SK-N-SH (cell line): ENCODE measurements at regions of chr11 and their contacts with region 1.

Region 1: DNA sequence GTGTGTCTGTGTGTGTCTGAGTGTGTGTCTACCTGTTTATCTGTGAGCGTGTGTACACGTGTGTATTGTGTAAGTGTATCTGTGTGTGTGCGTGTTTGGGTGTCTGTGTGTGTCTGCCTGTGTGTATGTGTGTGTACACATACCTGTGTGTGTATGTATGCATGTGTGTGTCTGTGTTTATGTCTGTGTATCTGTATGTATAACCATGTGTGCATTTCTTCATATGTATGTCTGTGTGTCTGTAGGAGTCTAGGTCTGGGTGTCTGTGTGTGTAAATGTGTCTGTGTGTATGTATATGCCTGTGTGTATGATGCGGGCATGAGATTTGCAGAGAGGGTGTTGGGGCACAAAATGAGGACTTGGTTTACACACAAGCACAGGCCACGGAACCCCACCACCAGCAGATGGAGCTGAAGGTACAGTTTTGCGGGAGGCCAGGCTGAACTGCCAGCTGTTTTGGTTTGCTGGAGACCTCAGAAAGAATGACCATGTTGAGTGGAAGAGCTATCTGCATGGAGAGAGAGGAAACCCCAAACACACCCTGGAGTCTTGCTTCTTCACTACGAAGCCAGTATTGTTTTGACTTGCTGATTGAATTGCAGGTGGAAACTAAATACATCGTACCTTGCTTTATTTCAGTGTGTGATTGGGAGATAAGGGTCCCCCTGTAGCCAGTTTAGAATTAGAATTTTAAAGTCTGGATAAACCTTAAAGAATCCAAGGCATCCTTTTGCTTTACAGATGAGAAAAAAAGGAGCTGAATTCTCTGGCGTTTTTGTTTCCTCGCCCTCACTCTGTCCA is 497.2 kb downstream of the NTM start:
- DNase-seq: peak; percentile 70
- H3K4me3 ChIP-seq: no peak overlapping the region; a peak in 1 of 4 replicates
- H3K27ac ChIP-seq: no peak overlapping the region
- H3K4me1 ChIP-seq: peaks cover 0 to 11% of the 10 kb centered on the region in 2 experiments; a peak in 2 of 4 replicates
- H3K27me3 ChIP-seq: no peaks in the 10 kb centered on the region
- CTCF ChIP-seq: peak; percentile 94
- EP300 ChIP-seq: no peak
- RAD21 ChIP-seq: peak; percentile 97

Region 2: DNA sequence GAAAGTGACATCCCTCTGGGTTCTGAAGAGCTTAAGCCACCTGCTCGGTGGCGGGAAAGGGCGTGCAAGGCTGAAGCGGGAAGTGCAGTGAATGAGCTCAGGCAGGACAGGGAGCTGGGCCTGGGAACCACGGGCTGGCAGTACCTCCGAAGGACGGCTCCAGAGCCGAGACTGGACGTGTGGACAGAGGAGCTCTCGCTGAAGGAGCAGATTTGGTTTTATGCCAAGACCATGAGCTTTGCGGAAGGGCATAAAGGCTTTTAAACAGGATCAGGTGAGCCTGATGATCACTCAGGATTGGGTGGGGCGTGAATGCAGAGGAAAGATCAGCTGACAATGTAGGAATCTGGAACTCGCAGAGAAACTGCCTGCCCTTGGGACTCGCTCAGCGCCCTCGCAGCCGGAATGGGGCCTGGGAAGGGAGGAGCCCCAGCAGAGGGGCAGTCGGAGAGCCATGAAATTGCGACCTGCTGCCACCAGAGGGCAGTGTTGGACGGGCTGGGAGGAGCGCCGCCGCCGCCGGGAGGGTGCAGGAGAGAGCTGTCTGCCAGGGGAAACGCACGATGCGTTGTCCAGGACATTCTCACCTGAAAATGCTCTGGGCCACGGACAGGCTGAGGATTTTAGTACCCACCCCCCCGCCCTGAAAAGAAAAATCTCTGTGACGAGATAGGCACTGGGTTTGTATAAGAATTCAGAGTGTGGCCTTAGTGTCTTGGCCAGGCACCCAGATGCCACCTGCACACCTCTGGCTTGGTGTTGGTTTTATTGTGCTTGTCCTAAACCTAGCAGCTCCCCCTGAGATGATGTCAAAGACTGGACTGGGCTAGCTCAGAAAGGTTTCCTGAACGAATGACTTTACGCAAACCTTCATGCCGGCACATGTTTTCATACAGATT is 172.9 kb before region 1 on chr11:
- CTCF ChIA-PET with region 1: interaction called, 20 read pairs
- POLR2A ChIA-PET with region 1: no interaction called
- DNase-seq: peak; percentile 86
- H3K4me3 ChIP-seq: no peak overlapping the region; a peak in 1 of 4 replicates
- H3K27ac ChIP-seq: no peak overlapping the region
- H3K4me1 ChIP-seq: peaks cover 0 to 7% of the 10 kb centered on the region in 2 experiments; a peak in 1 of 4 replicates
- H3K27me3 ChIP-seq: no peaks in the 10 kb centered on the region
- CTCF ChIP-seq: peak; percentile 84
- EP300 ChIP-seq: no peak
- RAD21 ChIP-seq: peak; percentile 76

Region 3: DNA sequence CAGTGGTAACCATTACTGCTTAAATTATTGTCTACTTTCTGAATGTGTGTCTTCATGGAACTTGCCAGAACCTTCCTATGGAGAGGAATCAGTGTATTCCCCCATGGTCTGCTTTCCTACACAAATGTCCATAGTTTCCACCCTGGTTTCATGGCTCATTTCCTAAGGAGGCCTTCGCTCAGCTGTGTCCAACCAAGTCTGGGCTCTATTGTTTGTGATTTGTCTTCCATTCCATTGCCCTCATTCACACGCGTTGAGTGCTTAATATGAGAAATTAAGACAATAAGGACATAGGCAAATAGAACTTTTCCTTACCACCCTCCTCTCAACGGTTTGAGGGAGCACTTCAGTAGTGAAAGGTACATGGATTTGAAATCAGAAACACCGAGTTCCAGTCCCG is 13.3 kb after region 1 on chr11:
- CTCF ChIA-PET with region 1: interaction called, 10 read pairs
- POLR2A ChIA-PET with region 1: no interaction called
- DNase-seq: no peak
- H3K4me3 ChIP-seq: no peak overlapping the region
- H3K27ac ChIP-seq: no peak overlapping the region
- H3K4me1 ChIP-seq: peaks cover 0 to 8% of the 10 kb centered on the region in 2 experiments; a peak in 1 of 4 replicates
- H3K27me3 ChIP-seq: no peaks in the 10 kb centered on the region
- CTCF ChIP-seq: no peak
- EP300 ChIP-seq: no peak
- RAD21 ChIP-seq: no peak

Region 4: GRCh38 chr11:132022733-132023478 is 155.2 kb after region 1 on chr11:
- CTCF ChIA-PET with region 1: interaction called, 79 read pairs
- POLR2A ChIA-PET with region 1: no interaction called
- DNase-seq: no peak
- H3K4me3 ChIP-seq: no peak overlapping the region
- H3K27ac ChIP-seq: peak overlapping the region; percentile 53 to 81; a peak in 3 of 4 replicates
- H3K4me1 ChIP-seq: peaks cover 6 to 38% of the 10 kb centered on the region in 2 experiments
- H3K27me3 ChIP-seq: no peaks in the 10 kb centered on the region
- CTCF ChIP-seq: no peak
- EP300 ChIP-seq: peak in 1 of 2 experiments; percentile 78; a peak in 1 of 4 replicates
- RAD21 ChIP-seq: no peak

Region 5: DNA sequence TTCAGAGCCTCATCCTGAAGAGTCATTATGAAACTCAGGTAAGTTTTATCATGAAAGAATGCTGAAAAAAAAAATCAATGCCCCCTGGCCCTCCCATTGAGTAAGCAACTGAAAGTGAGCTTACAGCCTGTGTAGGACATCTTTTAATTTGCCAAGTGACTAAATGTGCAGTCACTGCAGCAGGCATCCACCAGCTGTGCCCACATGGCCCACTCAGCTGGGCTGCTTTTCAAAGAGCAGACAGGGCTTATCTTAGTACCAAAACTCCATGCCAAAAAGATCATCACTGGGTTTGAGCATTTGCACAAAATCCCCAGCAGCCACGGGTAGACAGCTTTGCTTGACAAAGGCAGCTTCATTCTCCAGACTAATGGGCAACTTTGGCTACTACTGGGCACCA is 212.5 kb after region 1 on chr11:
- CTCF ChIA-PET with region 1: no interaction called
- POLR2A ChIA-PET with region 1: no interaction called
- DNase-seq: no peak
- H3K4me3 ChIP-seq: no peak overlapping the region
- H3K27ac ChIP-seq: no peak overlapping the region
- H3K4me1 ChIP-seq: peaks cover 0 to 5% of the 10 kb centered on the region in 2 experiments; a peak in 1 of 4 replicates
- H3K27me3 ChIP-seq: no peaks in the 10 kb centered on the region
- CTCF ChIP-seq: no peak
- EP300 ChIP-seq: no peak
- RAD21 ChIP-seq: no peak

Region 6: GRCh38 chr11:132099692-132100091 is 232.0 kb after region 1 on chr11:
- CTCF ChIA-PET with region 1: no interaction called
- POLR2A ChIA-PET with region 1: no interaction called
- DNase-seq: peak; percentile 27
- H3K4me3 ChIP-seq: no peak overlapping the region
- H3K27ac ChIP-seq: no peak overlapping the region
- H3K4me1 ChIP-seq: peaks cover 0 to 2% of the 10 kb centered on the region in 2 experiments; a peak in 1 of 4 replicates
- H3K27me3 ChIP-seq: no peaks in the 10 kb centered on the region
- CTCF ChIP-seq: peak; percentile 40
- EP300 ChIP-seq: no peak
- RAD21 ChIP-seq: peak; percentile 30

Region 7: DNA sequence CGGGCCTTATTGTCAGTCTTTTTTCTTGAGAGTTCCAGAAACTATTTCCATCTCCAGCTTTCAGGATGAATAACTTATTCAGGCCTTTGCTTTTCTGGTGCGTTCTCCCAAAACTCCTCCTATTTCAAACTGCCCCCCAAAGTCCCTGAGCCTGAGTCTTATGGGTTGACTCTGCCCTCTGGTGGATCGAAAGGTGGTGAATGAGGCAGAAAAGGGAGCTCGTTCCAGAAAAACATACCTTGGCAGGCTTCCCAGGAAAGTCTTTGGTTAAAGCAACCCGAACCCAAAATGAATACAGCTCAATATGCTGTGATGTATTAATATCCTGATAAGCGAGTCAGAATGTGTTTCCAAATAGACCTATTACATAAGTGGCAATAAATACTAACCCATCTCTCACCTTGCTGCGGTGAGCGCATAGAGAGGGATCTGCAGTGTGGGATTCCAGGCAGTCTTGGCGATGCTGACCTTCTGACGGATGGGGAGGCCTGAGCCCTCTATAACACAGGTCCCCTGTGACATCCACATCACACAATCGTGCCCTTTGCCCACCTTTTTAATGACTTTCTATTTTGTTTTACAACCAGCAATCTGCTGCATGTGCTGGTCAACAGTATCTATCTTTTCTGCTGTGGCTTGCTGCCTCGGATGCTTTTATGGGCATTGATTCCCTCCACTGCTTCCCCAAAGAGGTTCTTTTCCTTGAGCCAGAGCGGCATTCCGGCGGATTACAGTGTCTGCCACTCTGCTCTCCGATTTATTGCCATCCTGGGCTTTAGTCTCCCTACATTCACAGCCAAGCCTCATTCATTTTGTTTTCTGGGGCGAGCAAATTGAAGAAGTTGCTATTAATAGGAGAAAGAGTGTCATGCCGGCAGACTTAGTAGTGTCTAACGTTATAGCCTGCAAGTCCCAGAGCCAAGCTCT is 259.6 kb after region 1 on chr11:
- CTCF ChIA-PET with region 1: interaction called, 45 read pairs
- POLR2A ChIA-PET with region 1: no interaction called
- DNase-seq: peak; percentile 66
- H3K4me3 ChIP-seq: no peak overlapping the region
- H3K27ac ChIP-seq: peak overlapping the region in 1 of 2 experiments; percentile 69; a peak in 1 of 4 replicates
- H3K4me1 ChIP-seq: peaks cover 0 to 10% of the 10 kb centered on the region in 2 experiments; a peak in 2 of 4 replicates
- H3K27me3 ChIP-seq: no peaks in the 10 kb centered on the region
- CTCF ChIP-seq: peak; percentile 89
- EP300 ChIP-seq: no peak
- RAD21 ChIP-seq: peak; percentile 82

Region 8: DNA sequence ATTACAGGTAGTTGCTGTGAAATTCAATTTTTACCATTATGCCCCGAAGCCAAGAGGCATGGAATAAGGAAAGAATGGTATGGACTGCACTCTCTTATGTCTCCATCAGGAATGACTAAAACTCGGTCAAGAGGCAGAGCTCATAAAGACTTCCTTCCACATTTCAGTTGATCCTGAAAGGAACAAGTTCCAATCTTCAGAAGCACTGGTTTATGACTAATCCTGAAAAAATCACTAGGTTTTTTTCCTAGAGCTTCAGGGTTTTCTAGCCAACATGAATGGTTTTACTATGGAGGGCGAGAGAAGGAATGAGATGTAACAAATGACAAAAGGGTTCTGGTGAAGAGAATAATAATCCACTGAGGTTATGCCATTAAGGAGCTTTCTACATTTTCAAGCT is 335.0 kb after region 1 on chr11:
- CTCF ChIA-PET with region 1: no interaction called
- POLR2A ChIA-PET with region 1: no interaction called
- DNase-seq: no peak
- H3K4me3 ChIP-seq: no peak overlapping the region
- H3K27ac ChIP-seq: no peak overlapping the region
- H3K4me1 ChIP-seq: no peaks in the 10 kb centered on the region
- H3K27me3 ChIP-seq: no peaks in the 10 kb centered on the region
- CTCF ChIP-seq: no peak
- EP300 ChIP-seq: no peak
- RAD21 ChIP-seq: no peak

Region 9: GRCh38 chr11:132941024-132941646 is 1073.5 kb after region 1 on chr11:
- CTCF ChIA-PET with region 1: interaction called, 10 read pairs
- POLR2A ChIA-PET with region 1: no interaction called
- DNase-seq: peak; percentile 56
- H3K4me3 ChIP-seq: no peak overlapping the region; a peak in 1 of 4 replicates
- H3K27ac ChIP-seq: no peak overlapping the region
- H3K4me1 ChIP-seq: peaks cover 0 to 2% of the 10 kb centered on the region in 2 experiments; a peak in 1 of 4 replicates
- H3K27me3 ChIP-seq: peaks cover 4% of the 10 kb centered on the region; the same call in 1 of the 2 replicates
- CTCF ChIP-seq: peak; percentile 88
- EP300 ChIP-seq: no peak
- RAD21 ChIP-seq: peak; percentile 82